GM13976 (cell line): ENCODE measurements at regions of chr3 and their contacts with region 1.

Region 1: GRCh38 chr3:32733631-32734229 is 48.7 kb downstream of the CNOT10 start:
- DNase-seq: peak; percentile 45
- CTCF ChIP-seq: peak; percentile 43

Region 2: DNA sequence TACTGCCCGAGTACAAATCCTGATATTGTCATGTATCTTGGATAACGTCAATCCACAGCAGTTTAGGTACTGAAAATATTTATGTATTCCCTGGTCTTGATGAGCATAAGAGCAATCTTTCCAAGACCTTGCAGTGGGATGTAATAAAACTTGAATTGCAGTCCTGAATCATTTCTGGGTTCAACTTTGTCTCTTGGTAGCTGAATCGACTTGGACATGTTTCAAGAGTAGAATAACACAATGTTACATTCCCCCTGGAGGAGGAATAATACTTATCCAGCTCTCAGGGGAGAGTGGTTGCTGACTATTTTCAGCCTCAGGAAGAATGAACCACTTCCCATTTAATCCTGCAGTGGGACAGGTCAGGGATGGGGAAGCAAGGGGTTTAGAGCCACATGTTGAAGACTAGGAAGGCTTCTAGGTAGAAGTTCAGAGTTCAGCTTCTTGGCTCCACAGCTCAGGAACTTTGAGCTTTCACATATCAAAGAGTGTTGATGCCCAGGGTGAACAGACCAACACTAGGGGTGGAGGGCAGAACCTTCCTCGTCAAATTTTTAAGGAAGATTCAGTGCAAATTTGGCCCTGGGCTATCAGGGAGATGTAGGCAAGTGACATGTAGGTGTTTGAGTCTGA is 670.7 kb before region 1 on chr3:
- in situ Hi-C with region 1: no loop called
- DNase-seq: no peak
- CTCF ChIP-seq: no peak

Region 3: GRCh38 chr3:32934150-32934742 is 200.5 kb after region 1 on chr3:
- in situ Hi-C with region 1: loop called (anchors 10 kb)
- DNase-seq: peak; percentile 50
- CTCF ChIP-seq: peak; percentile 43

Region 4: GRCh38 chr3:33074217-33075067 is 340.7 kb after region 1 on chr3:
- in situ Hi-C with region 1: loop called (anchors 25 kb)
- DNase-seq: peak; percentile 78
- CTCF ChIP-seq: peak; percentile 84